ENCODE measurements at regions of chr15 and their contacts with region 1.

Region 1: GRCh38 chr15:73240866-73241499 is 127.8 kb downstream of the HCN4 start:
- DNase-seq: no peak
- H3K4me3 ChIP-seq: no peak overlapping the region
- CTCF ChIP-seq: peak; percentile 78

Region 2: GRCh38 chr15:73258271-73259108 is 17.5 kb after region 1 on chr15:
- CTCF ChIA-PET with region 1: interaction called, 111 read pairs
- POLR2A ChIA-PET with region 1: no interaction called
- DNase-seq: no peak
- H3K4me3 ChIP-seq: no peak overlapping the region
- CTCF ChIP-seq: no peak

Region 3: GRCh38 chr15:73265536-73266153 is 24.7 kb after region 1 on chr15:
- CTCF ChIA-PET with region 1: interaction called, 193 read pairs
- POLR2A ChIA-PET with region 1: no interaction called
- DNase-seq: no peak
- H3K4me3 ChIP-seq: no peak overlapping the region
- CTCF ChIP-seq: peak; percentile 70

Region 4: GRCh38 chr15:73325193-73325861 is 84.3 kb after region 1 on chr15:
- CTCF ChIA-PET with region 1: no interaction called
- POLR2A ChIA-PET with region 1: no interaction called
- DNase-seq: no peak
- H3K4me3 ChIP-seq: no peak overlapping the region
- CTCF ChIP-seq: no peak

Region 5: DNA sequence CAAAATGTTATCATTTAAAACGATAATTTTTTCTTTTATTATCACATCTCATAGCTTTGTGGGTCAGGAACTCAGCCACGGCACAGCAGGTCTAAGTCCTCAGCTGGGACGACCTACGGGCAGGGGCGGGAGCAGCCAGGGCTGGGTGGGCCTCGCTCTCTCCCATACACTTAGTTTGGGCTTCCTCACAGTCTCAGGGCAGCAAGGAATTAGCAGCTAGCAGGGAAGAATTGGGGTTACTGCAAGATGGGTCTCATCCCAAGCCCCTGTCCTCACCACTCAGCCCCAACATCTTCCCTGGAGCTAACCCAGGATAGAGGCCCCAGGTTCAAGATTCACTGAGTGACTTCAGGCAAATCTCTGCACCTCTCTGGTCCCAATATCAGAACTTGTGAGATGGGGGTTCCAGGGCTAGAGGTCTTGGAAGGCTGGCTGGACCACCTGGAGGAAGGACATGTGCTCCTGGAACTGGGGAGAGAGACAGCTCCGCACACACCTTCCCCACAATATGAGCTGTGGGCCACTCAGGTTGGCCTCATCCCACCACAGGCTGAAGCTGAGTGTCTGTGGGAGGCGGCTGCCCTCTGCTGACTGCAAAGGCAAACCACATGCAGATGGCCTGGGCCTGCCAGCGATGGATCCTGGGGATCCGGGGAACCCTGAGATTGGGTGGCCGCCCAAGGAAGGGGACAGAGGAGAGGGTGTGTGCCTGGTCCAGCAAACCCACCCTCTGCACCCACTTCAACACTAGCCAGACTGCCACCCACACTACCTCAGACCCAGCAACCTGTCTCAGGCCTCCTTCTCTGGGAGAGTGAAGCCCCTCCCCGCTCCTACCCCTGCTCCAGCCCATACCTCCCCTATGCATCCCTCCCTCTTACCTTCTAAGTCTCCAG is 1081.4 kb after region 1 on chr15:
- CTCF ChIA-PET with region 1: no interaction called
- POLR2A ChIA-PET with region 1: no interaction called
- DNase-seq: no peak
- H3K4me3 ChIP-seq: no peak overlapping the region
- CTCF ChIP-seq: peak; percentile 99

Measured in AG04449 (cell line).